BJ (cell line): ENCODE measurements at regions of chr6 and their contacts with region 1.

Region 1: GRCh38 chr6:33732826-33733708 is 13.6 kb downstream of the IP6K3 start:
- DNase-seq: no peak
- H3K4me3 ChIP-seq: no peak overlapping the region
- H3K27me3 ChIP-seq: peaks cover 6% of the 10 kb centered on the region
- CTCF ChIP-seq: peak; percentile 15; the same call in 1 of the 2 replicates

Region 2: GRCh38 chr6:33744001-33744848 is 11.2 kb after region 1 on chr6:
- CTCF ChIA-PET with region 1: interaction called, 37 read pairs
- POLR2A ChIA-PET with region 1: no interaction called
- DNase-seq: no peak
- H3K4me3 ChIP-seq: no peak overlapping the region
- H3K27me3 ChIP-seq: no peaks in the 10 kb centered on the region
- CTCF ChIP-seq: peak; percentile 93

Region 3: DNA sequence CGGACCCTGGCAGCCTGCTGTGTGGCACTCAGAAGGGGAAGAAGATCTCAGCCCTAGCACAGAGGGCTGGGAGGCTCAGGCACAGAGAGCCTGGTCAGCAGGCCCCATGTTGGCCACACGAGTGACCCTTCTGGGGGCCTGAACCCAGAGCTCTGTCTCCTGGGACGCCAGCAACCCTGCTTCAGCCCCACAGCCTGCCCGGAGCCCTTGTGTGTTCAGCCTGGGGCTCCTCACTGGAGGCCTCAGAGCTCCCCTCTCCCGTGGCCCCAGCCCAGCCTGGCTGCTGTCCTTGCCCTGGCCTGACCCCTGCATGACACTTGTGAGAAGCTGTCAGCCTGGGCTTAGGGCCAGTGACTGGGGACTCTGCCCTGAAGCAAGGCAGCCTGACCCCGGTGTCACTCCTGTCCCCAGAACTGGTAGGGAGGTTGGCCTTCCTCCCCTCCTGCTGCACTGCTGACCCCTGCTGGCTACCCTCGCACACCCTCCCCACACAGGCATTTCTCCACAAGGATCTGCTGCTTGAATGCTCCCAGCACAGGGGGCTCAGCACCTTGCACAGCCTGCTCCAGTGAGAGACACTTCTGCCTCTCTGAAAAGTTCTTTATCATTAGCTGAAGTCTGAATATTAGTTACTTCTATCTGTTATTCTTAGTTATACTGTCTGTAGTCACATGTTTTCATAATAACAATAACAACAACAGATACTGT is 29.0 kb after region 1 on chr6:
- CTCF ChIA-PET with region 1: interaction called, 15 read pairs
- POLR2A ChIA-PET with region 1: no interaction called
- DNase-seq: no peak
- H3K4me3 ChIP-seq: no peak overlapping the region
- H3K27me3 ChIP-seq: no peaks in the 10 kb centered on the region
- CTCF ChIP-seq: peak; percentile 85